ENCODE measurements at regions of chr2 and their contacts with region 1.

Region 1: DNA sequence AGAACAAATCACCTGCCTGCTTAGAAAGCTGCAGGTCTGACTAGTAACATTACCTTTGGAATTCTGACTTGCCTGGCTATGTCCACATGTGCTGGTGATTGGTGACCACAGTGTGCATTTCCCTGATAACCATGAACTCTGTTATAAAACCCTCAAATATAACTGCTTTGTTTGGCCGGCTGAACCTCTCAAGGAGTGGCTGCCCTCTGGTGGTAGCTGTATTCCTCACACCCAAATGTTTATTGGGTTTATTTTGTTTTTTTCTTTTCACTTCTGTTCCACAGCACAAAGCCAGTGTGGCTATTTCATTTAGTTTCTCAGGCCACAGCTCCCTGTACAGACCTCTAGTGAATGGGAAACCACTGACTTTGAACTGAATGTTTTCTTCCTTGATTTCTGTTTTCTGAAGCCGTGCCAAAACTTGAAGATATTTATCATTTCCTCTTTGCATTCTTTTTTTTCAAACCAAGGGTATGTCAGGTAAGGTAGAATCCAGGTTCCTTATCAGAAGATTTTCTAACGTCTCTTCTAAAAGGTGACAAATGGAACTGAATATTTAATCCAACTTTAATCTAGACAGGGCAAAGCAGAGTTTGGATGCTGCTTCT is 549.0 kb upstream of the VRK2 start:
- DNase-seq: peak in 1 of 2 experiments; percentile 56
- H3K4me3 ChIP-seq: no peak overlapping the region
- H3K27ac ChIP-seq: no peak overlapping the region
- H3K4me1 ChIP-seq: no peaks in the 10 kb centered on the region
- H3K27me3 ChIP-seq: no peaks in the 10 kb centered on the region
- CTCF ChIP-seq: peak; percentile 94

Region 2: DNA sequence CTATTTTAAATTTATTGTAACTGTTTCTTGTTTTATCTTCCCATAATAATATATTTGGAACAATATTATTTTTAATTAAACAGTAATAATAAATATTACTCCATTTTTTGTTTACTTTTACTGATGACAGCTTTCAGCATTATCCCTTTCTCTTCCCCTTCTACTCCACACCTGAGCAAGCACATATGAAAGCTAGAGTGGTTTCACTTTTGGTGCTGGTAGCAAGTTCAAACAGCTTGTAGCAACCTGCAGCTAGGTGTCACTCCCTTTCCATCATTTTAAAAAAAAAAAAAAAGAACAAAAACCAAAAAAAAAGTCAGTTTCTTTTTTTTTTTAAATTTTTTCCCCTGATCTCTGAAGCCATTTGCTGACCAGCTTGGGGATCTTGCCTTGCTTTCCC is 512.0 kb before region 1 on chr2:
- CTCF ChIA-PET with region 1: interaction called, 3 read pairs
- POLR2A ChIA-PET with region 1: no interaction called
- intact Hi-C with region 1: loop called (anchors 1 kb)
- DNase-seq: no peak
- H3K4me3 ChIP-seq: no peak overlapping the region
- H3K27ac ChIP-seq: no peak overlapping the region
- H3K4me1 ChIP-seq: no peaks in the 10 kb centered on the region
- H3K27me3 ChIP-seq: no peaks in the 10 kb centered on the region
- CTCF ChIP-seq: no peak

Region 3: DNA sequence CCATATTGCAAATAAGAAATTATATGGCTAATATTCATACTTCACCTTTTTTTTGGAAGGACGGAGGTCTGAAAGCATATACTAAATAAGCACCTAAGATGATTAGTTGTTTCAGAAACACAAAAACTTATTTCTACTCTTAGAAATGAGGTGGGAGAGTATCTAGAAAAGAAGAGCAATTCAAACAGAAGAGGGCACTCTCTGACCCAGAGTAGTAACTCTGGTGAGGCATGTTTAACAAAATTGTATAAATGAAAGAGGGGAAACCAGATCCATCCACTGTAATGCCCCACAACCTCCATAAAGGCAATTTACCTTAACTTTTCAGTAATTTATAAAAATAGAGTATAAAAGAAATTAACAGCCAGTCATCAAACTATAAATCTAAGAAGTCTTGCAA is 120.6 kb before region 1 on chr2:
- CTCF ChIA-PET with region 1: no interaction called
- POLR2A ChIA-PET with region 1: no interaction called
- intact Hi-C with region 1: loop called (anchors 1 kb)
- DNase-seq: no peak
- H3K4me3 ChIP-seq: no peak overlapping the region
- H3K27ac ChIP-seq: no peak overlapping the region
- H3K4me1 ChIP-seq: no peaks in the 10 kb centered on the region
- H3K27me3 ChIP-seq: no peaks in the 10 kb centered on the region
- CTCF ChIP-seq: no peak; the same call in 1 of the 2 replicates

Region 4: DNA sequence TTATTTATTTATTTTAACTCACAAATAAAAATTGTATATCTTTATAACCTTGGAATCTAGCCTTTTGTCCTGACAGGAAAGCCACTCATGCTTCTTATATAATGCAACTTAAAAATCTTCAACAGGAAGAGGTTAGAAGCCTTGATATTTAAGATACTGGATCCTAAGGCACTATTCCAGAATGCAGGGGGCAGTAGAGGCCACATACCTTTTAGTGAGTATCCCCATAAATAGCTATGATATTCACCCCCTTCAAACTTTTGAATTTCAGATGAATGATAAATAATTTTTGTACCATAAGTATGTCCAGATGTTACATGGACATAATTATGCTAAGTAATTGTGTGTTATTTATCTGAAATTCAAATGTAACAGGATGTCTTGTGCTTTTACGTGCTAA is 43.6 kb before region 1 on chr2:
- CTCF ChIA-PET with region 1: no interaction called
- POLR2A ChIA-PET with region 1: no interaction called
- intact Hi-C with region 1: no loop called
- DNase-seq: no peak
- H3K4me3 ChIP-seq: no peak overlapping the region
- H3K27ac ChIP-seq: no peak overlapping the region
- H3K4me1 ChIP-seq: no peaks in the 10 kb centered on the region
- H3K27me3 ChIP-seq: no peaks in the 10 kb centered on the region
- CTCF ChIP-seq: 0 out of 2 replicates have a peak, but pooled peaks have one; percentile 19